GM13976 (cell line): ENCODE measurements at regions of chr10 and their contacts with region 1.

Region 1: GRCh38 chr10:101839421-101840063 is 4.1 kb downstream of the KCNIP2 start:
- DNase-seq: peak; percentile 87
- CTCF ChIP-seq: no peak

Region 2: GRCh38 chr10:101545898-101546297 is 293.6 kb before region 1 on chr10:
- in situ Hi-C with region 1: no loop called
- DNase-seq: no peak
- CTCF ChIP-seq: no peak

Region 3: DNA sequence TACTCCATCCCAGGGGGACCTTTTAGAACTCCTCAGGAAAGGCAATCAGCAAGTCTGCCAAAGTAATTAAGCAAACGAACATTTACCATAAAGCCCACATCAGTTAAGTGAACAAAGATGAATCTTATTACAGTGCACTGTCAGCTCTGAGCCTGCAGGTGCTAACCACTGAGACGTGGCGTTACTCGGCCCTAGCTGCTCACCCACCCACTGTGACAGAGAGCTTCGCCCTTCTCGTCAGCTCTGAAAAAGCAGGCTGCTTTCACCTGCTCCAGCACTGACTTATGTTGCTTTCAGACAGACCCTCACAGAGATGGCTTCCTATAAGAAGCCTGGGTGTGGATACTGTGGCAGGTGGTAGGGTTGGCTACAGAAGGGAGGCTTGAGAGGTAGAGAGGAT is 61.8 kb after region 1 on chr10:
- in situ Hi-C with region 1: no loop called
- DNase-seq: peak; percentile 59
- CTCF ChIP-seq: peak; percentile 8

Region 4: DNA sequence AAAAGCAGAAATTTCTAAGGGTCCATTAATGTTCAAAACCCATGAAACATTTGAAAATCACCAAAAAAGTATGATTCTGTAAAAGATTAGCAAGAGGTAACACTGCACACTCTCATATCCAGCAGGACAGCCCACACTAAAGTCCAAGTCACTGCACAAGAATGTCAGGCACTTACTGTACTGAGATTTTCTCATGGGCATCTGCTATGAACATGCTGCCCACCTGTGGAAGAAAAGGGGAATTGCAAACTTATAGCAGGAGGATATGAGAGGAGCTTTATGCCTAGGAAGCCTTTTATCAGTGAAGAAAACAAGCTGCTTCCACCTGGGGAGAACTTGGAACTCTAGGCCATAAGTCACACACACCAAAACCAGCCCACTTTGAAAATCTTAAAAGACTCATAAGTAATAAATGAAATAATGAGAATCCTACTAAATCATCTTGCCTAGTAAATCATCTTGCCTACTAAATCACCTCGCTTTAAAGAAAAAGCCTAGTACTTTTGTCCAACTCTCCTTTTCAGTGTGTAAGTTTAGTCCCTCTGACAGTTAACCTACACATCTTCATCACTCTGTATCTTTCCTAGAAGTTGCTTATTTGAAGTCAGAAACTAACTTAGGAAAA is 170.4 kb after region 1 on chr10:
- in situ Hi-C with region 1: loop called (anchors 5 kb)
- DNase-seq: peak; percentile 75
- CTCF ChIP-seq: peak; percentile 92